ENCODE measurements at regions of chr1 and their contacts with region 1.

Region 1: GRCh38 chr1:21200767-21201166 is 24.1 kb upstream of the EIF4G3 start:
- DNase-seq: no peak
- ATAC-seq: no peak
- H3K4me3 Mint-ChIP-seq: no peak overlapping the region
- H3K27ac Mint-ChIP-seq: no peak overlapping the region
- H3K4me1 Mint-ChIP-seq: no peaks in the 10 kb centered on the region
- H3K27me3 Mint-ChIP-seq: peaks cover 4% of the 10 kb centered on the region
- CTCF ChIP-seq: no peak

Region 2: DNA sequence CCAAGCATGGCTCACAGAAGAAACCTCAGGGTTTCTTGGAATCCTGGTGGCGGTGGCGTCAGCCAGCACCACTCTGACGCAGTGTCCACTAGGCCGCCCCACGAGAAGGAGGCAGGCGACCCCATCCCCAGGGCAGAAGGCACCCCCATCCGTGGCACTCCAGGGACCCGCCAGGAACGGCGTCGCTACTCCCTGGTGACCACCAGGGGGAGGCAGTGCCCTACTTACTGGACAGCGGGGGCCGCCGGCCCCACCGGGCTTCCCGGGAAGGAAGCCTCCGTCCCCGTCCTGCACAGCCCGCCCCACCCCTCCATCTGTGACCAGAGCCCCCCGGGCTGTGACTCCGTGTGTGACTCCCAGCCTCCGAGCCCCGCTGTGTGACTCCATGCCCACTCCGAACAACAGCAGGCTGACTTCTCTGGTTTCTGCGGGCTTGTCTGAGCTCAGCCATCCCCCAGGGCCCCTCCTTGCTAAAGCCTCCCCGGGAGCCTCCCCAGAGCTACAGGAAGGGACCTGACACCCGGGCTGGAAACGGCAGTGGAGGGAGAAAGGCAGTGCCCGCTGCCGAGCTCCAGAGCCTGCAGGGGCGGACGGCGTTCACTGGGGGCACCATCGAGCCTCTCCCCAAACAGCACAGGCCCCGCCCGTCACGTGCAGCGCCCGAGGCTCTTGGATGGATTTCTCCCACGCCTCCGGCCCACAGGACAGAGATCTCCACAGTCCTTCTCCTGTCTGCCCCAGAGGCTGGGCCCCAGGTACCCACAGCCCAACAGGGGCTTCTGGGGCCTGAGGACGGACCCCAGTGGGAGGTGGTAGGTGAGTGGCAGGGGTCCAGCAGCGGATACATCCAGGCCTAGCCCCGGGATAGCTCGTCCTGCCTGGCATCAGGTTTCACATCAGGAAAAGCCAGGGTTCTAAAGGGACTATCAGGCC is 504.1 kb before region 1 on chr1:
- CTCF ChIA-PET with region 1: interaction called, 66 read pairs
- POLR2A ChIA-PET with region 1: no interaction called
- intact Hi-C with region 1: loop called (anchors 1 kb)
- DNase-seq: peak; percentile 67
- ATAC-seq: peak; percentile 95
- H3K4me3 Mint-ChIP-seq: peak overlapping the region; percentile 87
- H3K27ac Mint-ChIP-seq: no peak overlapping the region
- H3K4me1 Mint-ChIP-seq: peaks cover 4% of the 10 kb centered on the region
- H3K27me3 Mint-ChIP-seq: no peaks in the 10 kb centered on the region
- CTCF ChIP-seq: peak; percentile 72

Region 3: GRCh38 chr1:20732588-20733360 is 468.0 kb before region 1 on chr1 and contains the start of gene SH2D5:
- CTCF ChIA-PET with region 1: no interaction called
- POLR2A ChIA-PET with region 1: interaction called, 3 read pairs
- intact Hi-C with region 1: loop called (anchors 1 kb)
- DNase-seq: peak; percentile 45
- ATAC-seq: peak; percentile 74
- H3K4me3 Mint-ChIP-seq: peak within 1 kb of the TSS; percentile 85
- H3K27ac Mint-ChIP-seq: peak within 1 kb of the TSS; percentile 62
- H3K4me1 Mint-ChIP-seq: peaks cover 29% of the 10 kb centered on the region
- H3K27me3 Mint-ChIP-seq: peaks cover 11% of the 10 kb centered on the region
- CTCF ChIP-seq: no peak
- total RNA-seq, gene SH2D5: 0.69 and 0.89 TPM in 2 replicates

Region 4: DNA sequence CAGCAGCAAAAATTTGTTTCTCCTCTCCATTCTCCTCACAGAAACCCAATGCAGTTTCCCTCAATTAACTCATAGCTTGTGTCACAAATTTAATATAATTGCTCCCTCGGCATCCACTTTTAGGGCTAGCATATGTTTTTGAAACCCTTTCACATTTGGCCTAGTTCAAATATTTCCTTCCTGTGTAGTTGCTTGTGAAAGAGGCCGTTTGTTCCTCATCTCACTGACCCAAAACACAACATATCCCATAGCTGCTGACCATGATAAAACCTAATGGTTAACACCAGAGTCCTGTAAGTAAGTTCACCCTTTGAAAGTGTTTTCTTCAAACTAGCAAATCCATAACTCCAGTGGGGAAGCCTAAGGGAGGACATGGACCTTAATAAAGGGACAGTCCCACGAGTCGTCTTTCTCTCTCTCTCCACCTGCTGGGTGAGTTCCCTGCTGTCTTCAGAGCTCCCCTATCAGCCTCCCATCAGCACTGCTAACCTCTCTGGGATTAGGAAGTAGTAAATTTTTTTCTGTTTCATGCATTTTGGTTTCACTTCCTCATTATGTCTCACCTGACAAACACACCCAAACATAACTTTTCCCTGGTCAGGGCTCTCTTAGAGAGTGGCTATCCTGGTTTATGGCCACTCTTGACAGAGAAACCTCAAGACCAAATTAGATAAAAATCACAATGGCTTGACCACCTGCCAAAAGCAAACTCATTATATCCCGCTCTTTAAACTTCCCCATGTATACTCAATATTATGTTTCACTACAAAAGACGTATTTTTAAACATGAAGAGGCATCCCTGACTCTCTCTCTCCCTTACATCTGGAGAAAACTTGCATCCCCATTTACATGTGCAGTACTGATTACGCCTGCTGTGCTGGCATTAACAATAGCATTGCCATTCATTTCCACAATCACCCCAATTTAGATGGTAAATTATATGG is 236.0 kb before region 1 on chr1:
- CTCF ChIA-PET with region 1: interaction called, 11 read pairs
- POLR2A ChIA-PET with region 1: no interaction called
- intact Hi-C with region 1: no loop called
- DNase-seq: no peak
- ATAC-seq: peak; percentile 91
- H3K4me3 Mint-ChIP-seq: peak overlapping the region; percentile 11
- H3K27ac Mint-ChIP-seq: peak overlapping the region; percentile 64
- H3K4me1 Mint-ChIP-seq: peaks cover 25% of the 10 kb centered on the region
- H3K27me3 Mint-ChIP-seq: no peaks in the 10 kb centered on the region
- CTCF ChIP-seq: no peak

Region 5: GRCh38 chr1:20981915-20982314 is 218.9 kb before region 1 on chr1:
- CTCF ChIA-PET with region 1: interaction called, 44 read pairs
- POLR2A ChIA-PET with region 1: no interaction called
- intact Hi-C with region 1: loop called (anchors 1 kb)
- DNase-seq: no peak
- ATAC-seq: no peak
- H3K4me3 Mint-ChIP-seq: no peak overlapping the region
- H3K27ac Mint-ChIP-seq: no peak overlapping the region
- H3K4me1 Mint-ChIP-seq: no peaks in the 10 kb centered on the region
- H3K27me3 Mint-ChIP-seq: no peaks in the 10 kb centered on the region
- CTCF ChIP-seq: no peak

Region 6: DNA sequence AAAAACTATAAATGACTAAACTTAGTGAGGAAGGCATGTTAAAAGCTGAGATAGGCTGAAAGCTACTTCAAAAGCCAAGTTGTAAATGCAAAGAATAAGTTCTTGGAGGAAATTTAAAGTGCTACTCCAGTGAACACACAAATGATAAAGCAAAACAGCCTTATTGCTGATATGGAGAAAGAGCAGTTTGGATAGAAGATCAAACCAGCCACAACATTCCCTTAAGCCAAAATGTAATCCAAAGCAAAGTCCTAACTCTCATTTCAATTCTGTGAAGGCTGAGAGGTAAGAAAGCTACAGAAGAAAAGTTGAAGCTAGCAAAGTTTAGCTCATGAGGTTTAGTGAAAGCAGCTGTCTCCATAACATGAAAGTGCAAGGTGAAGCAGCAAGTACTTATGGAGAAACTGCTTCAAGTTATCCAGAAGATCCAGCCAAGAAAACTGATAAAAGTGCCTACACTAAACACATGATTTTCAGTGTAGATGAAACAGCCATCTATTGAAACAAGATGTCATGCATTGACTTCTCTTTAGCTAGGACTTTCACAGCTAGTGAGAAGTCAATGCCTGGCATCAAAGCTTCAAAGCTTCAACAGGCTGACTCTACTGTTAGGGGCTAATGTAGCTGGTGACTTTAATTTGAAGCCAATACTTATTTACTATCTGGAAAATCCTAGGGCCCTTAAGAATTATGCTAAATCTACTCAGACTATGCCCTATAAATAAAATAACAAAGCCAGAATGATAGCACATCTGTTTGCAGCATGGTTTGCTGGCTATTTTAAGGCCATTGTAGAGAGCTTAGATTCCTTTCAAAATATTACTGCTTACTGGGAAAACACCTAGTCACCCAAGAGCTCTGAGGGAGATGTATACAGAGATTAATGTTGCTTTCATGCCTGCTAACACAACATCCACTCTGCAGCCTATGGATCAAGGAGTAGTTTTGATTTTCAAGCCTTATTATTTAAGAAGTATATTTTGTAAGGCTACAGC is 212.6 kb before region 1 on chr1:
- CTCF ChIA-PET with region 1: interaction called, 44 read pairs
- POLR2A ChIA-PET with region 1: no interaction called
- intact Hi-C with region 1: no loop called
- DNase-seq: no peak
- ATAC-seq: no peak
- H3K4me3 Mint-ChIP-seq: no peak overlapping the region
- H3K27ac Mint-ChIP-seq: no peak overlapping the region
- H3K4me1 Mint-ChIP-seq: peaks cover 14% of the 10 kb centered on the region
- H3K27me3 Mint-ChIP-seq: no peaks in the 10 kb centered on the region
- CTCF ChIP-seq: no peak

Region 7: GRCh38 chr1:21184276-21184675 is 16.5 kb before region 1 on chr1:
- CTCF ChIA-PET with region 1: interaction called, 24 read pairs
- POLR2A ChIA-PET with region 1: interaction called, 13 read pairs
- intact Hi-C with region 1: no loop called
- DNase-seq: no peak
- ATAC-seq: peak; percentile 91
- H3K4me3 Mint-ChIP-seq: peak overlapping the region; percentile 56
- H3K27ac Mint-ChIP-seq: peak overlapping the region; percentile 83
- H3K4me1 Mint-ChIP-seq: peaks cover 30% of the 10 kb centered on the region
- H3K27me3 Mint-ChIP-seq: no peaks in the 10 kb centered on the region
- CTCF ChIP-seq: no peak